ENCODE measurements at regions of chr13 and their contacts with region 1.

Region 1: DNA sequence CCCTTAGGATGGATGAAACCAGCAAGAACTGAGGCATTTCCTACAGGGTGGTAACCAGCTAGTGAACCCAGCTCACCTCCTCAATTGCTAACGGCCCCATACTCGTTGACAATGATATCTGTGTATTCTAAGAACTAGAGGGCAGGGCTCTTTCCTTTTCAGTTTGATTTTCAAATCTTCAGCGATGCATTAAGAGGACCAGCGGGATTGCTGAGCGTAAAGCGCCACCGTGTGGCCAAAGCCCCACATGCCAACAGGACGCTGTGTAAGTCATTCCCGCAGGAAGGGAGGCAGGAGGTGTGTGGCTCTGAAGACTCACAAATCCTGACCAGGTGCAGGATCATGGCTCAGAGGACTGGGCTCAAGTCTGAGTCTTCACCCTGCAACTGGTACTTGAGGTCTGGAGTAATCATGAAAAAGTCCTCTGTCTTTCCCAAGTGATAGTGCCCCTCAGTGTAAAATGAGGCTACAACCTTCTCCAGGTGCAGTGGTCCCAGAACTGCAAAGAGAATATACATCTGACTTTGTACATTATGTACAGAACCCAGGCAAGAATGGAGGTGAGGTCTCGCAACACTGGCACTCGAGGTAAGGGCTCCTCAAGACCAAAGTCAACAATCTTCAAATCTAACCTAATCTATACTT is 40.9 kb downstream of the C13orf42 start:
- DNase-seq: no peak
- H3K4me3 ChIP-seq: no peak overlapping the region
- H3K27ac ChIP-seq: no peak overlapping the region
- H3K4me1 ChIP-seq: peaks cover 3 to 17% (median 9%) of the 10 kb centered on the region in 4 donors
- H3K27me3 ChIP-seq: peaks cover 0 to 7% (median 0%) of the 10 kb centered on the region in 4 donors
- CTCF ChIP-seq: peak; percentile 86 to 97 (median 89)
- EP300 ChIP-seq: no peak
- POLR2A ChIP-seq: no peak

Region 2: DNA sequence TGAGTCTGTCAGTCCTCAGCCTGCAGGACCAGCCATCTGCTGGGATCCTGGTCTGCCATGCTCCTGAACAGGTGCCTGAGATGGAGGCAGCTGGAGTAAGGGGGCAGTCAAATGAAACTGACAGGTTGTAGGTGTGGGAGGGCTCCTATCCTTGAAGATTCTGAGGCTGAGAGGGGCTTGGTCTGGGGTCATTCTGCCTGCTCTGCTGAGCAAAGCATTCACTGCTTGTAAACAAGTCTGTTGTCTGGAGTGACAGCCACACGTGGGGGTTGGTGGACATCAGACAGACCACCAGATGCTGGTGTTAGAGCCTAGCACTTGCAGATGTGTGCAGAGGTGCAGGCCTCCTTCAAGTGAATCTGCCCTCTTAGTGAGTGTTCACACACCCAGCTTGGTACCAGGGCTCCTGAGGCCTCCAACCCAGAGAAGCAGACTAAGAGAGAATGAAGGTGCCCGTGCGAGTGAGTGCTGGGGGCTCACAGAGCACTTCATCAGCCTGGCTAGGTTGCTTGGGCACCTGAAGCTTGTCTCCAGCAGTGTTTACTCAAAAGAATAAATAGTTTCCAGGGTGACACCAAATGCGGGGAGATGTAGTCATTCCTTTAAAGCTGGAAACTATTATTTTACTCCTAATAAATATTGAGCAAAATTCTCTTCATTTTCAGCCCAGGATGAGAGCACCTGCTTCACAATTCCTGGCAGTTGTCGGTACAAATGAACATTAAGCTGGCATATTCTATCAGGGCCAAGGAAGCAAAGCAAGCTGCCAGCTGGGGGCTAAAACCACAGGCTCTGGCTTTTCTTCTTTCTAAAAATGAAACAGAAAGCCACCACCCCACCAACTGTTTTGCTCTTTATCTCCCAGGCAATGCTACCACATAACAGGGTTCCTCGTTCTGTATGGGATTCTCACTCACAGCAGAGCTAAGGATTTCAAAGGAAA is 78.3 kb before region 1 on chr13:
- intact Hi-C with region 1: loop called (anchors 5 kb)
- DNase-seq: no peak
- H3K4me3 ChIP-seq: no peak overlapping the region
- H3K27ac ChIP-seq: peak overlapping the region; percentile 19 to 57 (median 38)
- H3K4me1 ChIP-seq: peaks cover 7 to 51% (median 46%) of the 10 kb centered on the region in 4 donors
- H3K27me3 ChIP-seq: no peaks in the 10 kb centered on the region
- CTCF ChIP-seq: no peak
- EP300 ChIP-seq: no peak
- POLR2A ChIP-seq: no peak

Region 3: GRCh38 chr13:51125498-51126226 is 55.5 kb after region 1 on chr13:
- intact Hi-C with region 1: no loop called
- DNase-seq: peak; percentile 89
- H3K4me3 ChIP-seq: no peak overlapping the region
- H3K27ac ChIP-seq: no peak overlapping the region
- H3K4me1 ChIP-seq: no peaks in the 10 kb centered on the region
- H3K27me3 ChIP-seq: no peaks in the 10 kb centered on the region
- CTCF ChIP-seq: peak; percentile 59 to 74 (median 59)
- EP300 ChIP-seq: no peak
- POLR2A ChIP-seq: no peak

Measured in esophagus muscularis mucosa (tissue), 4 donors.